Right ventricle myocardium inferior (tissue), 1 donor: ENCODE measurements at regions of chr12 and their contacts with region 1.

Region 1: GRCh38 chr12:108691175-108691997 is 39.9 kb downstream of the CORO1C start:
- DNase-seq: peak; percentile 98
- ATAC-seq: peak; percentile 95

Region 2: GRCh38 chr12:108611884-108612415 is 79.4 kb before region 1 on chr12:
- intact Hi-C with region 1: no loop called
- DNase-seq: no peak
- ATAC-seq: no peak

Region 3: DNA sequence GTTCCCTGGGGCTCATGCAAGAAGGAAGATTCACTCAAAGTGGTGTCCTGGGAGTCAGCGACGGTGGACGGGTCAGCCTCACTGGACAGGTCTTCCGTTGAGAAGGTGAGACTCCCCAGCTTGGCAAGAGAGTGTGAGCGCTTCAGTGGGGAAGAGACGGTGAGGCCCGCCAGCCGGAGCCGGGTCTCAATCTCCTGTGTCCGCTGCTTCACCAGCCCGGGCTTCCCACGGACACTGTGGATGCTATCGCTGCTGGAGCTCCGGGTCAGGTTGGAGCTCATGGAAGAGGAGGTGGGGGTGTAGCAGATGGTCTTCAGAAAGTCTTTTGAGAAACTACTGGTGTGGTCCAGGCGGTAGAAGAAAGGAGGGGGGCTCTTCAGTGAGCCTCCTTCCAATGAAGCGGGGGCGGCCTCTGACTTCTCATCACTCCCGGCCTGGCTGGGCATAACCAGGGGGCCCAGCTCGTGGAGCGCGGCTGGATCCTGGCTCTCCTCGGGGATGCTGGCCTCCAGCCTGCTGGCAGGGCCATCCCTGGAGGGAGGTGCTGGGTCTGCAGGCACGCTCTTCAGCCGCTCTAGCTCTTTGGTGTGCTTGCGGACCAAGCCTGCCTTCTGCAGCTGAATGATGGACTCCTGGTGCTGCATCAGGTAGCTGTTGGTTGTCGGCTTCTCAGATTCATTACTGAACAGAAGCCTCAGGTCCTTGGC is 96.8 kb after region 1 on chr12:
- intact Hi-C with region 1: loop called (anchors 5 kb)
- DNase-seq: peak; percentile 80
- ATAC-seq: peak; percentile 76

Region 4: DNA sequence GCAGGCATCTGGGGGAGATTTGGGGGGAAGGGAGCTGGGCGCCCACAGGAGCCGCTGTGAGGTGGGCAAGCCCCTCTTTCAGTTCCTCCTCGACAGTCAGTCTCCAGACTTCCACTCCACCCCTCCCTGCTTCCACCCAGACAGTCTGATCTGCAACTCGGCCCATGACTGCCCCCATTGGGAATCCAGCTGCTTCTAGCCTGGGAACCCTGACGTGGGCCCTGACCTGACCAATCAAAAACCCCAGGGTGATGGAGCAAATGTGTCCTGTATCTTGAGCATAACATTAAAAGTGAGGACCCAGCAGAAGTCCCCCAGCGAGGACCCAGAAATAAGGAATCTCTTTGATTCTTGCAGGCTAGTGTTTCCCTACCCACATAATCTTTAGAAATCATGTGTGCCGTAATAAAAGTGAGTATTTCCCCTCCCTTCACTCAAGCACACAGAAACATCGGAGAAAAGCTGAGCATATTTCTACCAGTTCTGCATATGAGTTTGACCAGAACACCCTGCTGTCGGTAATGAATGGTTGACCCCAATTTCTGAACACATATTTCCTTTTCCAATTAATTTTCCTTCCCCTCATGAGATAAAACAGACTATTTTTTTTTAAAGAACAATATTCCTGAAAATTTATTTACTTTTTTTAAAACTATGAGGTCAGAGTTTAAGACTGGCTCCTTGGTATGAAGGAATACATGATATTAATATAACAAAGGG is 159.6 kb after region 1 on chr12:
- intact Hi-C with region 1: no loop called
- DNase-seq: no peak
- ATAC-seq: peak; percentile 59